ENCODE measurements at regions of chr7 and their contacts with region 1.

Region 1: GRCh38 chr7:19754521-19755116 is 18.8 kb downstream of the TMEM196 start:
- ATAC-seq: no peak
- H3K4me3 ChIP-seq: no peak overlapping the region
- H3K27ac ChIP-seq: no peak overlapping the region
- H3K4me1 ChIP-seq: peaks cover 2 to 8% of the 10 kb centered on the region in 2 donors

Region 2: GRCh38 chr7:20310963-20311742 is 556.5 kb after region 1 on chr7:
- in situ Hi-C with region 1: loop called in 1 of 9 experiments (anchors 25 kb)
- ATAC-seq: peak in 2 of 8 experiments; percentile 20 to 39
- H3K4me3 ChIP-seq: no peak overlapping the region
- H3K27ac ChIP-seq: no peak overlapping the region
- H3K4me1 ChIP-seq: peaks cover 9 to 16% of the 10 kb centered on the region in 2 donors

Region 3: DNA sequence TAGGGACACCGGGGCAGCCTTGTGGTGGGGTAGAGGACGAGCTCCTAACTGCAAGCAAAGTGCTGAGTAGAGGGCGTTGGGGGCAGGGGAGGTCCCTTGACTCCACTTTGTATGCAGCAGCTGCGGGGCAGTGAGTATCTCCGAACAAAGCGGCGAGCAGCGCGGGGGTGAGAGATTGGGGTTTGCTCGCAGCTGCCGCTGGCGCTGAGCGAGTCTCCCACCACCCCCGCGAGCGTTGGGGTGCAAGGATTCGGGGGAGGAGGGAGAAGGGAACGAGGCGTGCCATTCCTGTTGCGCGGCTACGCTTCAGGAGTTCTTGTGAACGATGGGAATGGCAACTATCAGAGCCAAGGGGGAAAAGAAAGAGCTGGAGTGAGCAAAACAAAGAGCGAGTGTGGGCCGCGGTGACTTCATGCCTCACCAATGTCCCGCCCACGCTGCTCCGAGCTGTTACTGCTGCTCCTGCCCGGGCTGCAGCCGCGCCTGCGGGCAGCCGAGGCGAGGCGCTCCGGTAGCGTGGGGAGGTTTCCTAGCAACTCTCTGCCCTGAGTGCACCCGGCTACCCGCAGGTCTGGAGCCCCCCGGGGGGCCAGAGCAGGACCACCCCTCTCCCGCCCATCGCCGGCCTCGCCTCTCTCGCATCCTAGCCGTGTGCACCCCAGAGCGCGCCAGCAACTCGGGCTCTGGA is 575.8 kb after region 1 on chr7 and contains the start of gene ITGB8:
- in situ Hi-C with region 1: loop called in 1 of 9 experiments (anchors 25 kb)
- ATAC-seq: peak; percentile 77 to 84 (median 82)
- H3K4me3 ChIP-seq: peak within 1 kb of the TSS; percentile 46 to 87 (median 80)
- H3K27ac ChIP-seq: peak within 1 kb of the TSS; percentile 88 to 98
- H3K4me1 ChIP-seq: peaks cover 2 to 12% of the 10 kb centered on the region in 2 donors
- total RNA-seq, gene ITGB8: 4.8 to 133 (median 15.5) TPM